Ascending aorta (tissue), 2 donors: ENCODE measurements at regions of chr19 and their contacts with region 1.

Region 1: DNA sequence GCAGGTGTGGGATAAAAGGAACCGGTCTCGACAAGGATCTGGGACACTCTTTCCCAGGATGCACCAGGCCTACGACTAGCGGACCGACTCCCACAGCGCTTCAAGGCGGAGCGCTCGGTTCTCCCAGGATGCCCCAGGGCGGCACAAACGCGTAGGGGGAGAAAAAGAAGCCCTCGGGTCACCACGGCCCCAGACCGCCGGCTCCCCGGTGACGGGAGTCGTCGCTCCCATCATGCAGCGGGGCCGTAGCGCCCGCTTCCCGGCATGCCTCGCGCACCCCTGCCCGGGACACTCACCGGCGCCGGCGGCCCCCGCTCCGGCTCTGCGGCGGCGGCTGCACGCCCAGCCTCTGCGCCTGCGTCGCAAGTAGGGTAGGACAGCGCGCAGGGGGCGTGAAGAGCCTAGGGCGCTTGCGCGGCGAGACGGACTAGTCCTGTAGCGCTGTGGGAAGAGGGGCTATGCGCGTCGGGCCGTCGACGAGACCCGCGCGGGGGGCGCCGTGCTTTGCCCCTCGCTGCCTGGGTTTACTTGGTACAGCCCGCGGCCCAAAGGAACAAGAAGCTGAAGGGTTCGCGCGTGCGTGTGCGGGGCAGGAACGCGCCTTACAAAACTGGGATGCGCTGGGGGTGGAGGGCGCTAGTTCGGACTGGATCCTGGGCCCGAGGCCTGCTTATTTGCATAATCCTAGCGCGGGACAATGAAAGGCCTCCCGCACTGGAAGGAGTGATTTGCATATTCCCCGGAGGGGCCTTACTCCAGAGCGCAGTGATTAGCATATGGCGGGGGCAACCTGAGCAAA is at the start of gene ZNF428:
- DNase-seq: peak; percentile 50 to 92
- H3K4me3 ChIP-seq: peak within 1 kb of the TSS; percentile 69 to 75
- H3K27ac ChIP-seq: peak within 1 kb of the TSS; percentile 87 to 89
- H3K4me1 ChIP-seq: peaks cover 0 to 7% of the 10 kb centered on the region in 2 donors
- H3K27me3 ChIP-seq: no peaks in the 10 kb centered on the region
- CTCF ChIP-seq: no peak
- total RNA-seq, gene ZNF428: 37.3 TPM

Region 2: GRCh38 chr19:43575156-43575950 is 44.1 kb before region 1 on chr19 and contains the starts of genes PINLYP and XRCC1:
- intact Hi-C with region 1: loop called (anchors 2 kb)
- DNase-seq: peak; percentile 93 to 98
- H3K4me3 ChIP-seq: peak within 1 kb of the TSS; percentile 76 to 87
- H3K27ac ChIP-seq: peak within 1 kb of the TSS; percentile 67 to 86
- H3K4me1 ChIP-seq: peaks cover 9 to 10% of the 10 kb centered on the region in 2 donors
- H3K27me3 ChIP-seq: no peaks in the 10 kb centered on the region
- CTCF ChIP-seq: no peak
- total RNA-seq, gene PINLYP: 2.2 TPM
- total RNA-seq, gene XRCC1: 6.4 TPM